B cell (primary cell): ENCODE measurements at regions of chr1 and their contacts with region 1.

Region 1: GRCh38 chr1:19704247-19705113 is 39.8 kb downstream of the HTR6 start:
- DNase-seq: peak; percentile 56
- ATAC-seq: peak; percentile 58
- H3K4me3 ChIP-seq: no peak overlapping the region
- H3K4me3 Mint-ChIP-seq: no peak overlapping the region
- H3K27ac ChIP-seq: no peak overlapping the region
- H3K27ac Mint-ChIP-seq: no peak overlapping the region
- H3K4me1 ChIP-seq: no peaks in the 10 kb centered on the region
- H3K4me1 Mint-ChIP-seq: peaks cover 3% of the 10 kb centered on the region
- H3K27me3 ChIP-seq: no peaks in the 10 kb centered on the region
- H3K27me3 Mint-ChIP-seq: no peaks in the 10 kb centered on the region
- CTCF ChIP-seq: peak; percentile 88

Region 2: GRCh38 chr1:19694298-19694697 is 10.2 kb before region 1 on chr1:
- CTCF ChIA-PET with region 1: interaction called, 11 read pairs
- POLR2A ChIA-PET with region 1: no interaction called
- intact Hi-C with region 1: no loop called
- DNase-seq: no peak
- ATAC-seq: no peak
- H3K4me3 ChIP-seq: no peak overlapping the region
- H3K4me3 Mint-ChIP-seq: no peak overlapping the region
- H3K27ac ChIP-seq: no peak overlapping the region
- H3K27ac Mint-ChIP-seq: no peak overlapping the region
- H3K4me1 ChIP-seq: peaks cover 0 to 6% of the 10 kb centered on the region in 2 donors
- H3K4me1 Mint-ChIP-seq: peaks cover 10% of the 10 kb centered on the region
- H3K27me3 ChIP-seq: no peaks in the 10 kb centered on the region
- H3K27me3 Mint-ChIP-seq: no peaks in the 10 kb centered on the region
- CTCF ChIP-seq: no peak

Region 3: DNA sequence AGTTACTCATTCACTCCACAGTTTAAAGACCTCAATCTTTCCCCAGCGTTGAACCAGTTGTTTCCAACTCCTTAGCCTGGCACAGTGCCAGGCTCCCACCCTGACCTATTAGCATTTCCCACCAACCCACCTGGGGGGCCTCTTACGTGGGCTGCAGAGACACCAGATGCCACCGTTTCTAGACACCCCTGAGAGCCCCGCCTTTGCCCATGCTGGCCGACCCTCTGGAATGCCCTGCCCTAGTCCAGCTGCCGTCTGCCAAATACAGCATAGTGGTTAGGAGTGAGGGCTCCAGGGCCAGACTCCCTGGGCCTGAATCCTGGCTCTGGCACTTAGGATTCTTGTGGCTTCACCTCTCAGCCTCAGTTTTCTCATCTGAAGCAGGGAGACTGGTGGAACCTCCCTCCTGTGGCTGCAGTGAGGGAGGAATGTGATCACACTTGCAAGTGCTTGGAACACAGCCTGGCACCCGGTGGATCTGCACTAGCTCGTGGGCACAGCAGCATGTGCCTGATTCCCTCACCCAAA is 30.1 kb after region 1 on chr1:
- CTCF ChIA-PET with region 1: no interaction called
- POLR2A ChIA-PET with region 1: no interaction called
- intact Hi-C with region 1: no loop called
- DNase-seq: no peak
- ATAC-seq: no peak
- H3K4me3 ChIP-seq: no peak overlapping the region
- H3K4me3 Mint-ChIP-seq: no peak overlapping the region
- H3K27ac ChIP-seq: no peak overlapping the region
- H3K27ac Mint-ChIP-seq: no peak overlapping the region
- H3K4me1 ChIP-seq: no peaks in the 10 kb centered on the region
- H3K4me1 Mint-ChIP-seq: no peaks in the 10 kb centered on the region
- H3K27me3 ChIP-seq: no peaks in the 10 kb centered on the region
- H3K27me3 Mint-ChIP-seq: no peaks in the 10 kb centered on the region
- CTCF ChIP-seq: no peak